ENCODE measurements at regions of chr7 and their contacts with region 1.

Region 1: DNA sequence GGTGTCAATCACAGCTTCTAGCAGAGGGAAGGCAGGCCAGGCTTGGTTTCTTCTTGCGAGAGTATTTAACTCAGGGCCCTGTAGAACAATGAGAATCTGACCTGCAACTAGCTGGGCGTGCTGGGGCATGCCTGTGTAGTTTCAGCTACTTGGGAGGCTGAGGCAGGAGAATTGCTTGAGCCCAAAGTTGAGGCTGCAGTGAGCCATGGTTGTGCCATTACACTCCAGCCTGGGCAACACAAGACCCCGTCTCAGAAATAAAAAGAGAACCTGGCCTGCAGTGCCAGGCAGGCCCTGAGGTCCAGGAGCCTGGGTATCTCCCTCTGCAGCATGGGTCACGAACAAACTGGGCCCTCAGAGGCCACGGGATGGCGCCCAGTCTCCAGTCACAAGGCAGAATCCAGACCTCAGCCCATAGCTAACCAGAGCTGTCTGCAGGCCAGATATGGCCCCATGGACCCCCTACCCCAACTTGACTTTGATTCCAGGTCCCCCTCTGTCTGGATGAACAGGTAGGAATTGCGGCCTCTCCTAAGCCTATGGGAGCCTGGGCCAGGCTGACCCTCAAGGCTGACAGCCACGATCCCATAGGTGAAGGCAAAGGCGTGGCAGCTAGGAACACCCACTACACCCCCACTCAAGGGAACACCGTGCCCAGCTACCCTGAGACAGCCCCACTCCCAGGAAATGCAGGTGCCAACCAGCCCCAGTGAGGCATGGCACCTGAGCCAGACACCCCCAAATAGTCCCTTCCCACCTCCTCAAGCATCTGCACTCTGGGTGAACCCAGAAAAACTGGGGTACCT is 102.7 kb upstream of the TNRC18 start:
- DNase-seq: peak; percentile 62
- ATAC-seq: peak; percentile 2
- H3K4me3 Mint-ChIP-seq: peak overlapping the region; percentile 96
- H3K27ac Mint-ChIP-seq: peak overlapping the region; percentile 96
- H3K4me1 Mint-ChIP-seq: peaks cover 26% of the 10 kb centered on the region
- H3K27me3 Mint-ChIP-seq: no peaks in the 10 kb centered on the region
- CTCF ChIP-seq: no peak

Region 2: DNA sequence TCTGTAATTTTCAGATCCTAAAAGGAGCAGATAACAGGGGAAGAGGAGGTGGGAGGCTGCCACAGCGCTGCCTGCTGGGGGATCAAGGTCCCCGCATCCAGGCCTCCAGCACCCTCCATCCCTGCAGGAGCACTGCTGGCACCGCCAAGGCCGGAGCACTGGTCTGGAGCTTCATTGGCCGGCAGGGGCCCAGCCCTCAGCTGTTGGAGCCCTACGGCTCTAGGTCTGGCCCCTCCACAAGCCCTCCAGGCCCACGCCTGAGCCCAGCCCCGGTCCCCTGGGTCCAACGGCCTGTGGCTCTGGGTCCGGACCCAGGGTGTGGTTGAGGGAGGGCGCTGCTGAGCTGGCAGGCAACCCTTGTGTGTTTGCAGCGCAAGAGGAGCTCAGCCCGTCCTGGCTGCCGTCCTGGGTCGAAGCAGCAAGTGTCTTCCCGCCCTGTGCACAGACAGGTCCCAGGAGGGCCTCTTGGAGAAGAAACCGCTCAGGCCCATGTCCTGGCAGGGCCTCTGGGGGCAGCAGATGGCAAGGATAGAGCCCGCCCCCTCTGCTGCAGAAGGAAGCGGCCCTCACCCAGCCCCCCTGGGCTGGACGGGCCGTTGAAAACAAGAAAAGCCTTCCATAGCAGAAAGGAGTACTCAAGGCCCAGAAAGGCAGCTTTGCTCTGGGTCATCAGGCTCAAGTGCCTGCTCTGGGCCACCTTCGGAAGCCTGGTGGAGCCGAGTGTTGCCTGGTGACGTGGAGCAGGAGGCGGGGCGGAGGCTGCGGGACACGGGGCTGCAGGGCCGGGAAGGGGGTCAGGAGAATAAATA is 48.4 kb before region 1 on chr7:
- CTCF ChIA-PET with region 1: no interaction called
- POLR2A ChIA-PET with region 1: no interaction called
- intact Hi-C with region 1: no loop called
- DNase-seq: no peak
- ATAC-seq: peak; percentile 77
- H3K4me3 Mint-ChIP-seq: no peak overlapping the region
- H3K27ac Mint-ChIP-seq: no peak overlapping the region
- H3K4me1 Mint-ChIP-seq: peaks cover 5% of the 10 kb centered on the region
- H3K27me3 Mint-ChIP-seq: no peaks in the 10 kb centered on the region
- CTCF ChIP-seq: no peak

Region 3: DNA sequence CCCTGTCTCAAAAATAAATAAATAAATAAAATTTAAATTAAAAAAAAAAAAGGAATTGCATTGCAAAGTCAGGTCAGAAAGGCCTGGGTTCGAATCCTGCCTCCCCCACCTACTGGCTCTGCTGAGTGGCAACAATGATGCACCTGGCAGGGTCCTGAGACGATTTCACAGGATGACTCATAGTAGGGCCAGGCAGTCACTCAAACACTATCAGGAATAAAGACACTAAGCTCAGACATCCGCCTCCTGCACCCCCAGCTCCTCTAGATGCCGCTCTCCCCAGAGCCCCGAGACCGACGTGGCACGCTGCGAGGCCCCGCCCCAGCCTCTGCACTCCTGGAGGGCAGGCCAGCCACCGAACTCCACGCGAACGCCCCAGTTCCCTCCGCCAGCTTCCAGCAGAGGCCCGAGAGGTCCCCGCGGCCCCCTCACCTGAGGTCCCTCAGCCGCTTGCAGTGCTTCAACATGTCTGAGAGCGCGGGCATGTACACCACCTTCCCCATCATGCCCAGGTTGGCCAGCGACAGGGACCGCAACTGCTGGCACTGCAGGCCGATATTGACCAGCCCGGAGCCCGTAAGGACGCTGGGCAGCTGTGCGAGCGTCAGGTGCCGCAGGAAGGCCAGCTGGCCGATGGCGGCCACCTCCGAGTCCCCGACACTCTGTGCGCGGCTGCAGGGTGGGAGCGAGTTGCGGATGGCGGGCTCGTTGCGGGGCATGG is 26.1 kb before region 1 on chr7:
- CTCF ChIA-PET with region 1: interaction called, 12 read pairs
- POLR2A ChIA-PET with region 1: interaction called, 10 read pairs
- intact Hi-C with region 1: no loop called
- DNase-seq: no peak
- ATAC-seq: no peak
- H3K4me3 Mint-ChIP-seq: no peak overlapping the region
- H3K27ac Mint-ChIP-seq: no peak overlapping the region
- H3K4me1 Mint-ChIP-seq: peaks cover 20% of the 10 kb centered on the region
- H3K27me3 Mint-ChIP-seq: no peaks in the 10 kb centered on the region
- CTCF ChIP-seq: no peak

Region 4: GRCh38 chr7:5657901-5658300 is 131.6 kb after region 1 on chr7:
- CTCF ChIA-PET with region 1: no interaction called
- POLR2A ChIA-PET with region 1: no interaction called
- intact Hi-C with region 1: no loop called
- DNase-seq: no peak
- ATAC-seq: no peak
- H3K4me3 Mint-ChIP-seq: no peak overlapping the region
- H3K27ac Mint-ChIP-seq: no peak overlapping the region
- H3K4me1 Mint-ChIP-seq: peaks cover 24% of the 10 kb centered on the region
- H3K27me3 Mint-ChIP-seq: no peaks in the 10 kb centered on the region
- CTCF ChIP-seq: no peak